Tibial artery (tissue), 4 donors: ENCODE measurements at regions of chr1 and their contacts with region 1.

Region 1: DNA sequence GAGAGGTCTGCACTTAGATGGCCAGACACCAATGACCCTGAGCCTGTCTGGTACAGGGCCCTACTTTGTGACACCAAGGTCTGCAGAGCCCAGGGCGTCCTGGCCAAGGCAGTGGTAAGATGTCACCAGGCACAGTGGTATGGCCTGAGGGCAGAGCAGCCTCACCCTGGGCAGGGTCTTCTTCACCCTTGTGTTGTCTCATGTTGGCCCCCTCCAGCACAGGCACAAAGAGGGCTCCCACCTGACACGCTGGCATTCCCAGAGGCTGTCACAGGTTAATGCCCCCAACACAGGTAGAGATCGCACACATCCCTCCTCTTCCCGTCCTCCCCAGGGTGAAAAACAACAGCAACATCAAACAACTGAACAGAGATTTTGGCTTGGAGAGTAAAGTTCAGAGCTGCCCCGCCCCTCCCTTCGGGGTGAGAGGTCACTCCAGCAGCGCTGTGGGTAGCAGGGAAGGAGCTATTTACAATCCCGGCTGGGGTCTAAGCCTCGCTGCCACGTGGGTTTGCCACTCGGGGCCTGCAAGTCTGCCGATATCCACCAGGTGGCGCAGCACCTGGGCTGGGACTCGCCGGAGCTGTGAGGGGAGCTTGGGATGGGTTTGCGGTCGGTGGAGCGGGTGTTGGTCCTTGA is 12.6 kb downstream of the EFNA3 start:
- DNase-seq: peak; percentile 64 to 82
- H3K4me3 ChIP-seq: no peak overlapping the region
- H3K27ac ChIP-seq: no peak overlapping the region
- H3K4me1 ChIP-seq: peaks cover 0 to 26% (median 14%) of the 10 kb centered on the region in 4 donors
- H3K27me3 ChIP-seq: peaks cover 0 to 4% of the 10 kb centered on the region in 2 donors
- CTCF ChIP-seq: peak; percentile 93 to 99

Region 2: DNA sequence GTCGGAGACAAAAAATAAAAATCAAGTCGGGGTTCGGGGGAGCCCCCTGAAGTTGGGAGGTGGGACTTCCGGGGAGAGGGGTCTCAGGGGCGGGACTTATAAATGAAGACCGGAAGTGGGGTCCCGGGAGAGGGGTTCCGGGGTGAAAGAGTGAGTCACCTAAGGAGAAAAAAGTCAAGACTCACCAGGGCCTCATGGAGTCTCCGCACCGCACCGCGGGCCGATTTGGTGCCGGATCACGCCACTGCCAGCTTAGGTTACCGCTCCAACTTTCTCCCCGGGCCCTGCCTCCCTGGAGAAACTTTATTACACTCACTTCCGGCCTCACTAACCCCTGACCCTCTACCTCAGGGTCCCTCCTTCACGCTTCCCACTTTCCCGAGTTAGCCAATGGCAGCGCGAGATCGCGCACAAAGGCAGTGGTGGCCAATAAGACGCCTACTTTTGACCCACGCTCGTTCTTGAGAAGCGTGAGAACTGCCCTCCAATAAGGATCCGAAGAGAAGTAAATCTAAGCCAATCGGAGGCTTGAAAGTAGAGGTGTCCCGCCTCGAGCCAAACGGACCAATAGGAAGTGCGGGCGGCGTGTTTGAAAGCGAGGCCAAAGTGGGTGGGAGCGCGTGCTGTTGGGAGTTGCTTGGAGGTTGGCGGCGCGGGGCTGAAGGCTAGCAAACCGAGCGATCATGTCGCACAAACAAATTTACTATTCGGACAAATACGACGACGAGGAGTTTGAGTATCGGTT is 117.0 kb before region 1 on chr1 and contains the start of gene CKS1B:
- intact Hi-C with region 1: no loop called
- DNase-seq: peak; percentile 98 to 99
- H3K4me3 ChIP-seq: peak within 1 kb of the TSS; percentile 68 to 76
- H3K27ac ChIP-seq: peak within 1 kb of the TSS; percentile 95 to 97
- H3K4me1 ChIP-seq: peaks cover 0 to 54% (median 46%) of the 10 kb centered on the region in 4 donors
- H3K27me3 ChIP-seq: no peaks in the 10 kb centered on the region
- CTCF ChIP-seq: peak in 1 of 2 experiments; percentile 8

Region 3: DNA sequence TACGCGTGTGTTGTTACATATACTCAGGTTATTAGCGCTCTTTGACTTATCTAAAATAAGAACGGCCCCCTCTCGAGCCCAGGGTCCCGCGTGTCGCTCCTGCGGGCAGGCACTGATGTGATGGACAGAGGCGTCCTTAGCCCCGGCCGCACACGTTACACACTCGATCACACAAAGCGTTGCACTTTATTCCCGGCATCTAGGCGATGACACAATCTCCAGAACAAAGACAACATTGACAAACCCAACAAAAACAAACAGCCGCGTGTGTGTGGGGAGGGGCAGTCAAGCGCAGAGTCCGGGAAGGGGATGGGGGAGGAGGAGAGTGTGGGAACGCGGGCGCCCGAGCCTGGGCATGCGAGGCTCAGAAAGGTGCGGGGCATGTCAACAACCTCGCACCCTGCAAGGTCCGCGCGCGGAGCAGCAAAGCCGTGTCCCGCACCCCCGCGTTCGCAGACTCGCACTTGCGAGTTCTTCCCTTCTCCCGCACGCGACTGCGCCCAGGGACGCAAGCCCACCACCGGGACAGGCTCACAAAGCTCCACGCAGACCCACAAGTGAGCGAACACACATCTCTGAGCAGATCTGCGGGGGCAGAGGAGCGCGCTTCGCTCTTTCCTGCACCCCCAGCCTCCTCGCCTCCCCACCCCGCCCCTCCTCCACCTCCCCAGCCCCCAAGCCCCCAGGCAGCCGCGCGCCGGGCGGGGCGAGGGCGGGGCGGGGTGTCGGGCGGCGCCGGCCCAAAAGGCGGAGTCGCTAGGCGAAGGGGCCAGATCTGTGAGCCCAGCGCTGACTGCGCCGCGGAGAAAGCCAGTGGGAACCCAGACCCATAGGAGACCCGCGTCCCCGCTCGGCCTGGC is 36.1 kb after region 1 on chr1 and contains the start of gene EFNA1:
- intact Hi-C with region 1: loop called (anchors 5 kb)
- DNase-seq: peak; percentile 66 to 77
- H3K4me3 ChIP-seq: peak within 1 kb of the TSS; percentile 55 to 59
- H3K27ac ChIP-seq: peak within 1 kb of the TSS; percentile 41 to 62
- H3K4me1 ChIP-seq: peaks cover 0 to 39% (median 28%) of the 10 kb centered on the region in 4 donors
- H3K27me3 ChIP-seq: peaks cover 0 to 43% of the 10 kb centered on the region in 2 donors
- CTCF ChIP-seq: no peak

Region 4: GRCh38 chr1:155167166-155168104 is 76.2 kb after region 1 on chr1:
- intact Hi-C with region 1: loop called (anchors 2 kb)
- DNase-seq: peak; percentile 80 to 89
- H3K4me3 ChIP-seq: no peak overlapping the region
- H3K27ac ChIP-seq: no peak overlapping the region
- H3K4me1 ChIP-seq: peaks cover 3 to 22% (median 17%) of the 10 kb centered on the region in 4 donors
- H3K27me3 ChIP-seq: peaks cover 0 to 13% of the 10 kb centered on the region in 2 donors
- CTCF ChIP-seq: peak; percentile 83 to 90